K562 (cell line): ENCODE measurements at regions of chr11 and their contacts with region 1.

Region 1: DNA sequence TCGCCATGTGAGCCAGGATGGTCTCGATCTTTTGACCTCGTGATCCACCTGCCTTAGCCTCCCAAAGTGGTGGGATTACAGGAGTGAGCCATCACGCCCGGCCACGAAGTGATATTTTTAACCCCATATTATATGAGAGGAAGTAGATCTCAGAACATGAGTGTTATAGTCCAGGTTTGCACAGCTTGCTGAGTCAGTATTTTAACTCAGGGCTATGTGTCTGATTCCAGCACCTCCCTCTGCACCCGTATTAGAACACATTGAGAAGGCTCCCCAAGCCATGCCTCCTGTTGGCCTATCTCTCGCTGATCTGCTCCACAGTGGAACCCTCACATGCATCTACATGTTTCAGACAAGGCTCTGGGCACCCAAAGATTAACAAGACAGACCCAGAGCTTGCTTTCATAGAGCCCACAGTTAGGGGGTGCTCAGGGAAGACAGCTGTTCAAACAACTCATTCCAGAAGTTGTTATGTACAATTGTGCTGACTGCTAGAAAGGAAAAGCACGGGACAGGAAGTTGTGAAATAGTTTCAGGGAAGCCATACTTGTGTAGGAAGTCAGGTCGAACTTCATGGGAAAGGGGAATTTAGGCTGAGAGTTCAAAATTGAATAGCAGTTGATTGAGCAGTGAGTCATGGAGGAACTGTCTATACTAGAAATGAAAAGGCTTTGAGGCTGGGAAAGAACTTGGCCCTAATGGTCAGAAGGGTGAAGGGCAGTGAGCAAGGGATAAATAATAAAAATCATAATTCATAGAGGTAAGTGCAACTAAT is 49.3 kb upstream of the CLPB start:
- DNase-seq: no peak
- ATAC-seq: no peak; the same call in 2 of the 3 replicates
- H3K4me3 ChIP-seq: no peak overlapping the region
- H3K27ac ChIP-seq: no peak overlapping the region
- H3K4me1 ChIP-seq: peaks cover 0 to 5% of the 10 kb centered on the region in 2 experiments; a peak in 2 of 5 replicates
- H3K27me3 ChIP-seq: peaks cover 2 to 10% of the 10 kb centered on the region in 2 experiments; a peak in 2 of 5 replicates
- CTCF ChIP-seq: no peak
- EP300 ChIP-seq: no peak
- POLR2A ChIP-seq: no peak
- RAD21 ChIP-seq: no peak

Region 2: GRCh38 chr11:72405009-72405408 is 78.6 kb before region 1 on chr11:
- CTCF ChIA-PET with region 1: no interaction called
- POLR2A ChIA-PET with region 1: no interaction called
- in situ Hi-C with region 1: no loop called
- intact Hi-C with region 1: no loop called
- DNase-seq: no peak
- ATAC-seq: no peak
- H3K4me3 ChIP-seq: no peak overlapping the region
- H3K27ac ChIP-seq: no peak overlapping the region
- H3K4me1 ChIP-seq: no peaks in the 10 kb centered on the region; a peak in 1 of 5 replicates
- H3K27me3 ChIP-seq: no peaks in the 10 kb centered on the region
- CTCF ChIP-seq: no peak
- EP300 ChIP-seq: no peak
- POLR2A ChIP-seq: no peak
- RAD21 ChIP-seq: no peak

Region 3: GRCh38 chr11:72553706-72554105 is 70.1 kb after region 1 on chr11:
- CTCF ChIA-PET with region 1: no interaction called
- POLR2A ChIA-PET with region 1: no interaction called
- in situ Hi-C with region 1: no loop called
- intact Hi-C with region 1: loop called (anchors 1 kb)
- DNase-seq: peak; percentile 28 to 47 (median 36)
- ATAC-seq: peak; percentile 86
- H3K4me3 ChIP-seq: no peak overlapping the region
- H3K27ac ChIP-seq: no peak overlapping the region
- H3K4me1 ChIP-seq: no peaks in the 10 kb centered on the region
- H3K27me3 ChIP-seq: peaks cover 28 to 48% of the 10 kb centered on the region in 2 experiments
- CTCF ChIP-seq: peak; percentile 60 to 63 (median 60)
- EP300 ChIP-seq: no peak
- POLR2A ChIP-seq: no peak
- RAD21 ChIP-seq: peak in 1 of 2 experiments; percentile 60; a peak in 2 of 4 replicates

Region 4: DNA sequence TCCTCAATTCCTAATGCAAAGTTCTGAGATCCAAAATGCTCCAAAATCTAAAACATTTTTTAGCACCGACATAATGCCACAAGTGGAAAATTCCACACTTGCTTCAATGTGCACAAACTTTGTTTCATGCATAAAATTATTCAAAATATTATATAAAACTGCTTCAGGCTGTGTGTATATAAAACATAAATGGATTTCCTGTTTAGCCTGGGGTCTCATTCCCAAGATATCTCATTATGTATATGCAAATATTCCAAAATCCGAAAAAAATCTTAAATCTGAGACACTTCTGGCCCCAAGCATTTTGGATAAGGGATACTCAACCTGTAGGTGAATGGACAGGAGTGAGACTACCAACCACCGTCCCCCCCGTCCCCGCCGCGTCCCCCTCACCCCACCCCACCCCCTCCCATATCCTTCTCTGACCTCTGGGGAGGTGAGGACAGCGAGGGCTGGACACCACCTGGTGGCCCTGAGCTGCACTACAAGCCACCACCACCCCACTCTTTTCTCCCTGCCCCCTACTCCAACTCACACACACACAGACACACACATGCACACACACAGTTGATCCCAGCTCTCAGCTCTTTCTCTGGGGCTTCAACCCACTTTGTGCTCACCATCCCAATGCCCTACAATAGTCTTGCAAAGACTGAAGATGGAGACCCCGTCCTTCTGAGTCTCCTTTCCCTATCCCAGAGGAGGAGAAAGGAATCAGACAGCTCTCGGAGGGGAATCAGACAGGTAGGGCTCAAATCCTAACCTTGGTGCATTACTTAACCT is 89.7 kb after region 1 on chr11:
- CTCF ChIA-PET with region 1: interaction called, 16 read pairs
- POLR2A ChIA-PET with region 1: no interaction called
- in situ Hi-C with region 1: no loop called
- intact Hi-C with region 1: loop called (anchors 1 kb)
- DNase-seq: peak; percentile 63 to 88 (median 84)
- ATAC-seq: peak; percentile 97
- H3K4me3 ChIP-seq: no peak overlapping the region
- H3K27ac ChIP-seq: no peak overlapping the region
- H3K4me1 ChIP-seq: no peaks in the 10 kb centered on the region
- H3K27me3 ChIP-seq: peaks cover 9 to 55% of the 10 kb centered on the region in 2 experiments; a peak in 4 of 5 replicates
- CTCF ChIP-seq: peak; percentile 71 to 85 (median 78)
- EP300 ChIP-seq: no peak
- POLR2A ChIP-seq: no peak
- RAD21 ChIP-seq: peak; percentile 18 to 65; a peak in 3 of 4 replicates